Left ventricle myocardium superior (tissue), 1 donor: ENCODE measurements at regions of chr9 and their contacts with region 1.

Region 1: DNA sequence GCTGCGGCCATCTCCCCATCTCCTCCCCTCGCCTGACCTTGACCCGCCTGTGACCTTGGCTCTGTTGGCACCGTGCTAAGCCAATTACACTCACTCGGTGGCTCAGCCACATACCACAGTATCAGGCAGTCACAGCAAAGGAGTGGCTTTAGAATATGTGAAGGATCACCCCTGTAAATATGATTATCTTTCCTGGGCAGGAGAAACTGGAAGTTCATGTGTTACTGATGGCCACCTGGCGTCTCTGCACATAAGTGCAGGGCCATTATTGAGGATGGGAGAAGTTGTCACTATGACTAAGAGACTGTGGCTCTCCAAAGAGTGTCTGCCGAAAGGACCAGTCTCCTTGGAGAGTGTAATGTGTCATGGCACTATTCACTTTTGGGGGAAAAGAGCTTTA is 116.9 kb upstream of the S1PR3 start:
- DNase-seq: no peak
- ATAC-seq: peak; percentile 36

Region 2: GRCh38 chr9:88628114-88628513 is 246.3 kb before region 1 on chr9:
- intact Hi-C with region 1: no loop called
- DNase-seq: no peak
- ATAC-seq: no peak

Region 3: GRCh38 chr9:88722753-88723152 is 151.6 kb before region 1 on chr9:
- intact Hi-C with region 1: loop called (anchors 5 kb)
- DNase-seq: no peak
- ATAC-seq: peak; percentile 62

Region 4: GRCh38 chr9:88927510-88927909 is 53.1 kb after region 1 on chr9:
- intact Hi-C with region 1: no loop called
- DNase-seq: no peak
- ATAC-seq: peak; percentile 22